ENCODE measurements at regions of chr17 and their contacts with region 1.

Region 1: DNA sequence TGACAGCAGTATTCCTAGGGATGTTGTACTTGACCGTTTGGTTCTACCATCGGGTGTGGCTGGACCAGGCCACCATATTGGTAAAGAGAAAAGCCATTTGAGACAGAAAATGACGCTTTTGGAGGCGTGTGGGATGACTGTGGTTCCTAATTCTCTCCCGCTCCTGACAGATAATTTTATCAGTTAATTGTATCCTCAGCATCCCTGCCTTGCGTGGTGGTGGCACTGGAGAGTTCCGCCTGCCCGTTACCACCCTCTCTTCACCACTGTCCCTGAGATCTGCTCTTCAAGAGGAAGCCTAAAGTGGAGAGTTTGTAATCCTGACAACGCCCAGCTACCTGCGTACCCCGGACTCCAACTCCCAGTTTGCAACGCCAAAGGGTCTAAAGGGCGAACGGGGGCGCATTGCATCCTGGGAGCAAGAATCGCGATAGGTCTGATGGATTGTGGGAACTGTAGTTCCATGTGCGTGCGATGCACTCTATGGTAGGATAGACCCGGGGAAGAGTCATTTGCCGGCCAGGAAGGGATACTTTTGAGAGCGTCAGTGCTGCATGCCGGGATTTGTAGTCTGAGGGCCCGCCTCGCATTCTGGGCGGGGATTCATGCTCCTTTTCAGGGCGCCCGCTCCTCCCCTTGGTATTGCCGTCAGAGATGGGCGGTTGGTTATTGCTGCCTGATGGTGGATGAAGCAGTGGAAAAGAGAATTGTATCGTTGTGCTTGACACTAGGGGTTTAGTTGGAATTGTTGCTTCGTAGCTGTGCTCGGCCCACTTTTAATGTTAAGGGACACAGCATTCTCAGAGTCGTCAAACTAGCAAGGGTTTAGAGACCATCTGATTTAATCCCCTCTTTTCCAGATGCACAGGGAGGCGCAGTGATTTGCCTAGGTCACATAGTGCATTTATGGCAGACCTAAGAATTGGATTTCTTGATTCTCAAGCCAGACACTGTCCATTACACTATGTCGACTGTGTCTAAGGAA is 965 bp upstream of the PHF12 start:
- DNase-seq: peak; percentile 96
- H3K4me3 Mint-ChIP-seq: no peak overlapping the region
- H3K27ac Mint-ChIP-seq: no peak overlapping the region
- H3K4me1 Mint-ChIP-seq: peaks cover 15% of the 10 kb centered on the region
- H3K27me3 Mint-ChIP-seq: no peaks in the 10 kb centered on the region

Region 2: DNA sequence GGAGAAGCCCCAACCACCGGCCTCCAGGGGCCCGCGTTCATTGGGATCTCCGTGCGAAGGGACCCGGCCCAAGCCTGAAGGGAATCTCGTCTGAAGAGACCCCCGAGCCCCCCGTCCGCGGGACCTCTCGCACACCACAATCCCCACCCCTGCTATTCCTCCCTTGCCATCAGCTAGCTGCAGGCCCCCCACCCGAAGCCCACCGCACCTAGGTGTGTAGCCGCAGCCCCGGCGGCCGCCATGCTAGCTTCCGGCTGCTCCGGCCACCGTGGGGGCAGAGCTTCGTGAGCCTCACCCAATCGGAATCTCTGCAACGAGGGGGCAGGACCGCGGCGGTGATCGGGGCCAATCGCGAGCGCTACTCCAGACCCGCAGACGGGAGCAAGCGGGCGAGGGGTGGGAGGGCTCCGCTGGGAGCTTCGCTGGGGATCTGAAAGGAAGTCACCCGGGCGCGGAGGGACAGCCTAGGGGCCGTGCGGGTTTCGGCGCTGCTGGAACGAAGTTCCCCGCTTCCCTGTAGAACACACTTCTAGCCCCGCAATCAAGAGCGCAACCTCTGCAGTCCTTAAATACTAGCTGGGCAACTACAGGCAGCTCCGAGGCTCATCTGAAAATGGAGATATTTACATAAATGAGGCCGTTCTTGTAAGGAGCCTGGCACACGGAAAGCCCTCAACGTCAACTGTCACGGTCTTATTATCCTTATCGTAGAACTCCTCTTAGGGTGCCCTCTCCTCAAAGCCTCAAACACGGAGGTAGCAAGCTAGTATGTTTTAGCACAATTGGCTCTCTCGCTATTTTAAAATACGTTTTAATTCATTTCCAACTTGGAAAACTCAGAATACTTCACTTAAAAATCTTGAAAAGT is 380.8 kb before region 1 on chr17 and contains the start of gene PIGS:
- intact Hi-C with region 1: loop called (anchors 10 kb)
- DNase-seq: peak; percentile 91
- H3K4me3 Mint-ChIP-seq: peak within 1 kb of the TSS; percentile 94
- H3K27ac Mint-ChIP-seq: peak within 1 kb of the TSS; percentile 88
- H3K4me1 Mint-ChIP-seq: peaks cover 81% of the 10 kb centered on the region
- H3K27me3 Mint-ChIP-seq: no peaks in the 10 kb centered on the region
- total RNA-seq, gene PIGS: 57.8 and 61.2 TPM in 2 replicates

Region 3: GRCh38 chr17:28661635-28662537 is 290.4 kb before region 1 on chr17 and contains the starts of genes SDF2 and SUPT6H:
- intact Hi-C with region 1: loop called (anchors 5 kb)
- DNase-seq: peak; percentile 90
- H3K4me3 Mint-ChIP-seq: peak within 1 kb of the TSS; percentile 100
- H3K27ac Mint-ChIP-seq: peak within 1 kb of the TSS; percentile 99
- H3K4me1 Mint-ChIP-seq: peaks cover 53% of the 10 kb centered on the region
- H3K27me3 Mint-ChIP-seq: no peaks in the 10 kb centered on the region
- total RNA-seq, gene SDF2: 47.9 and 51.0 TPM in 2 replicates
- total RNA-seq, gene SUPT6H: 106 and 108 TPM in 2 replicates

Region 4: GRCh38 chr17:28743225-28744103 is 208.8 kb before region 1 on chr17 and contains the start of gene TRAF4:
- intact Hi-C with region 1: loop called (anchors 5 kb)
- DNase-seq: peak; percentile 72
- H3K4me3 Mint-ChIP-seq: peak within 1 kb of the TSS; percentile 90
- H3K27ac Mint-ChIP-seq: peak within 1 kb of the TSS; percentile 82
- H3K4me1 Mint-ChIP-seq: peaks cover 34% of the 10 kb centered on the region
- H3K27me3 Mint-ChIP-seq: no peaks in the 10 kb centered on the region
- total RNA-seq, gene TRAF4: 178 and 182 TPM in 2 replicates

Region 5: GRCh38 chr17:28842282-28843012 is 109.8 kb before region 1 on chr17 and contains the start of gene FAM222B:
- intact Hi-C with region 1: loop called (anchors 2 kb)
- DNase-seq: peak; percentile 85
- H3K4me3 Mint-ChIP-seq: peak within 1 kb of the TSS; percentile 97
- H3K27ac Mint-ChIP-seq: peak within 1 kb of the TSS; percentile 95
- H3K4me1 Mint-ChIP-seq: peaks cover 24% of the 10 kb centered on the region
- H3K27me3 Mint-ChIP-seq: no peaks in the 10 kb centered on the region
- total RNA-seq, gene FAM222B: 27.5 and 28.1 TPM in 2 replicates

Region 6: DNA sequence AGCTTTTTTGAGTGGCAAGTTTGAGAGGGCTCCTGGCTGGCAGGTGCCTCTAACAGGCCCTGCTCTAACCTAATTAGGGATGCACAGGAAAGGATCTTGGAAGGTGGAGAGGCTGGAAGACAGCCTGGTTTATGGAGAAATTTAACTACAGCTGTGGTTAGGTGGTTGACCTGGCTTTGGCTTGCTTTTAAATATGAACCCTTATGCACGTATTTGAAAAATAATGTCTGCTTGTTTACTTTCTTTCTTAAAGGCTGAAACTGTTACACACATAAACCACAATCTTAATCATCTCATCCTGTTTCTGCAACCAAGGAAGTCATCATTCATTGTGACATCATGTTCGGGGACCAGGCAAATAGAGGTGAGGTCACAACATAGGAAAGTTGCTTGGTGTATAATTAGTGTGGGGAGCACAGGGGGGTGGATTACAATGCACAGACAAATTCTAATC is 26.3 kb before region 1 on chr17:
- intact Hi-C with region 1: loop called (anchors 1 kb)
- DNase-seq: peak; percentile 62
- H3K4me3 Mint-ChIP-seq: peak overlapping the region; percentile 19
- H3K27ac Mint-ChIP-seq: peak overlapping the region; percentile 92
- H3K4me1 Mint-ChIP-seq: peaks cover 58% of the 10 kb centered on the region
- H3K27me3 Mint-ChIP-seq: no peaks in the 10 kb centered on the region

Region 7: DNA sequence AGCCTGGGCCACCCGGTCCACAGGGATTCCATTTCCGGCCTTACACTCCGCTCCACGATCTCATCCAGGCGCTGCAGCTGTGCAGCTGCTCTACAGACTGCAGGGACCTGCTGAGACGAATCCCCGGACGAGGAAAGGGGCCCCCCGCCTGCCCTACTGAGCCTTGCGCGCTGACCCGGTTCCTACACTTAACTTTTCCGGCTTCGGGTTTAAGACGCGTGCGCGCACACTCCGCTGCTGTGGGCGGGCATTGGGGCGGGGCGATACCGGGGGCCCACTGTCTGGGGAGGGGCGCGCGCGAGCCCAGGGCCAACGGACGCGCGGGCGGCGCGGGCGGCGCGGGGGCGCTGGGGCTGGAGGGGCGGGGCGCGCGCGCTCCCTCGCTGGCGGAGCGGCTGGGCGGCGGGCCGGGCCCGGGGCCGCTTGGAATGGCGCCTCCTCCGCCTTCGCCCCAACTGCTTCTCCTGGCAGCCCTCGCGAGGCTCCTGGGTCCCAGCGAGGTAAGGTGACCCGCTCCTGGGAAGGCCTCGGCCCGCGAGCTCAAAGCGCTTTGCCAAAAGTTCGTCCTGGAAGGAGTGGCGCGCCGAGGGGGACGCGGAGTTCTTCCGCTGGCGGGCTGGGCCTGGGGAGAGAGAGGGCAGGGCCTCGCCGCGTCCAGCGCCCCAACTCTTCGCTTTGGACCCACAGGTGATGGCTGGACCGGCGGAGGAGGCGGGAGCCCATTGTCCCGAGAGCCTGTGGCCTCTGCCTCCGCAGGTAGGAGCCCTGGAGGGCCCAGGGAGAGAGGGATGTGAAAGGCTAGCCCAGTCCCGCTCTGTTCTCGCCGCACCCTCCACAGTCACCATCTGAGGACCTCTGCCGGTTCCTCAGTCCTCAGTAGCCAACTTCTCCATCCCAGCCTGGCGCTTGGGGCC is 616.3 kb after region 1 on chr17 and contains the start of gene TP53I13:
- intact Hi-C with region 1: loop called (anchors 2 kb)
- DNase-seq: peak; percentile 87
- H3K4me3 Mint-ChIP-seq: peak within 1 kb of the TSS; percentile 89
- H3K27ac Mint-ChIP-seq: peak within 1 kb of the TSS; percentile 95
- H3K4me1 Mint-ChIP-seq: peaks cover 20% of the 10 kb centered on the region
- H3K27me3 Mint-ChIP-seq: peaks cover 1% of the 10 kb centered on the region
- total RNA-seq, gene TP53I13: 67.4 and 71.8 TPM in 2 replicates

Measured in activated T-helper 1 cell treated with anti-CD3 and anti-CD28 coated beads, Interleukin-12 subunit alpha, Interleukin-12 subunit beta, Interleukin-2, Interleukin-4 antibody, amounts not matched to agents 30 ng/mL and 10 ng/mL and 1 ng/mL, durations not matched to agents 14 hours and 24 hours and 36 hours (primary cell).